Activated CD4-positive, alpha-beta T cell treated with anti-CD3 and anti-CD28 coated beads for 36 hours (primary cell): ENCODE measurements at regions of chr2 and their contacts with region 1.

Region 1: GRCh38 chr2:134411828-134412638 is 158.2 kb downstream of the MGAT5 start:
- DNase-seq: peak; percentile 82
- ATAC-seq: peak; percentile 98
- H3K4me3 Mint-ChIP-seq: no peak overlapping the region
- H3K27ac Mint-ChIP-seq: no peak overlapping the region
- H3K4me1 Mint-ChIP-seq: peaks cover 41% of the 10 kb centered on the region
- H3K27me3 Mint-ChIP-seq: no peaks in the 10 kb centered on the region

Region 2: DNA sequence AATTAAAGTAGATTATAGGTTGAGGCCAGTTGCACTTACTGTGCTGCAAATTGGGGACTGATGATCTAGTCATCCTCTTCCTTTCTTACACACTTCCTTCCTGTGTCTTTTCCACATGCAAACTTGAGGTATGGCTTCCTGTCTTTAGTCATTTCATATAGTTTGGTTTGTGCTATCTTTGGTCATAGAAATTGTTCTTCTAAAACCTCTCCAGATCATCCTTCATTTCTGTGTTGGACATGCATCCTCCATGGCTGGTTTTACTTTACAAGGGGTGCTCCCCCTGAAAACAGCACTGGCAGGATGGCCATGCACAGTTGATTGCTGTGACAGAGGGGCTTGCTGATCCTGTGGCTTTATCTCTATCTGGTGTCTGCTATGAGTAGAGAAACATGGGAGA is 121.7 kb before region 1 on chr2:
- CTCF ChIA-PET with region 1: no interaction called
- POLR2A ChIA-PET with region 1: no interaction called
- intact Hi-C with region 1: loop called in 1 of 2 experiments (anchors 5 kb)
- DNase-seq: peak; percentile 22
- ATAC-seq: peak; percentile 66
- H3K4me3 Mint-ChIP-seq: no peak overlapping the region
- H3K27ac Mint-ChIP-seq: no peak overlapping the region
- H3K4me1 Mint-ChIP-seq: peaks cover 7% of the 10 kb centered on the region
- H3K27me3 Mint-ChIP-seq: no peaks in the 10 kb centered on the region